HEK293 (cell line): ENCODE measurements at regions of chr1 and their contacts with region 1.

Region 1: DNA sequence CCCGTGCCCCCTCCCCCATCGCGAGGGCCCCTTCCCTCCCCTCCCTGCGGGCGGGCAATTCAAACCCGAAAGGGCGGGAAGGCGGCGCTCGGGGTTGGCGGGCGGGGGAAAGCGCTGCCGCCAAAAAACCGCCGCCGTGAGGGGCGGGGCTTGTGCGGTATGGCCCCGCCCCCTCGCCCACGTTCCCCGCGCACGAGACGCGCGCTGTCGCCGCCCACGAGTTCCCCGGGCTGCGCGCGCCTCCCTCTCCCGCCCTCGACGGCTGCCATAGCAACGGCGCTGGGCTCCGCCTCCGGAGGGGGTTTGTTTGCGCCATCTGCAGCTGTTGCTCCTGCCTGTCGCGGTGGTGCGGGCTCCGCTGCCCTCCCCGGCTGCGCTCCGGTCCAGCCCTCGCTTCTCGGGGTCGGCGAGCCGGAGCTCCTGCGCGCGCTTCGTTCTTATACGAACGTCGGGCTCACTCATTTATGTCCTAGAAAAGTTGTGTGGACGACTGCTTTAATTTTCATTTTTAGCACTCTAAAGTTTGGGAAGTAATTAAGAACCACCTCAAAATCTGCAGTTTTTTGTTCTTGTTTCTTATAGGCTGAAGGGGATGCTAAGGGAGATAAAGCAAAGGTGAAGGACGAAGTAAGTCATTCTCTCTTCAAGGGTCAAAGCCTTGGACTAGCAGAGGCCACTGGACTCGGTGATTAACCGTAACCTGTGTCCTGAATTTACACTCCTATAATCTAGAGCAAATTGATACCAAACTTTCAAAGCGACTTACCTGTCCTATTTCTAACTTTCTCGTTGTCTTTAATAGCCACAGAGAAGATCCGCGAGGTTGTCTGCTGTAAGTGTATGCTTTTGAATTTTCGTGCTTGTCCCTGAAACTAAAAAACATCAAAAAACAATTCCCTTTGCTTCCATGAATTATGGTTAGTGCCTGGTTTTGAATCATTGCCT is 933 bp downstream of the HMGN2 start:
- H3K4me3 ChIP-seq: peak overlapping the region; percentile 88
- H3K27ac ChIP-seq: peak overlapping the region; percentile 100; the same call in 1 of the 2 replicates
- H3K4me1 ChIP-seq: peaks cover 2% of the 10 kb centered on the region; the same call in 1 of the 2 replicates
- CTCF ChIP-seq: no peak

Region 2: GRCh38 chr1:26274801-26275425 is 198.3 kb before region 1 on chr1:
- CTCF ChIA-PET with region 1: no interaction called
- POLR2A ChIA-PET with region 1: no interaction called
- H3K4me3 ChIP-seq: no peak overlapping the region
- H3K27ac ChIP-seq: no peak overlapping the region
- H3K4me1 ChIP-seq: 0 out of 2 replicates have a peak, but pooled peaks cover 3% of the 10 kb centered on the region
- CTCF ChIP-seq: no peak

Region 3: GRCh38 chr1:26431979-26432695 is 41.0 kb before region 1 on chr1 and contains the start of gene DHDDS:
- CTCF ChIA-PET with region 1: interaction called, 14 read pairs
- POLR2A ChIA-PET with region 1: interaction called, 13 read pairs
- H3K4me3 ChIP-seq: peak within 1 kb of the TSS; percentile 64
- H3K27ac ChIP-seq: peak within 1 kb of the TSS; percentile 1; the same call in 1 of the 2 replicates
- H3K4me1 ChIP-seq: peaks cover 5% of the 10 kb centered on the region
- CTCF ChIP-seq: no peak

Region 4: DNA sequence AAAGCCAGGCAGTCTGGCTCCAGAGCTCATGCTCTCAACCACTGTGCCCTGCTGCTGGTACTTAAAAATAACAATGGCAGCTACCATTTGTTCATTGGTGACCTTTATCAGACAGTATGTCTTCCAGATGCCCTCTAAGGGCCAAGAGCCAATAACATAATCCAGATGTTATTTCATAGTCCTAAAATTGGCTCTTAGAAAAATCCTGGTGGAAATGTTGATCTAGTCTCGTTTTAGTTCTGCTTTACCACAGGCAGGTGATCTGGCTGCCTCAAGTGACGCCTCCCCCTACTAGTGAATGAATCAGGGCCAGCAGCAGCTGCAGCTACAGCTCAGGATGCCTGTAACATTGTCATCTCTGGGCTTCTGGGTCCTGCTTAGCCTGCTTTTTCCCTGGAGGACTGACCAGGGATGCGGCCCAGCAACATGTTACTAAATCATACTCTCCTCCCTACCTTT is 13.6 kb before region 1 on chr1:
- CTCF ChIA-PET with region 1: interaction called, 30 read pairs
- POLR2A ChIA-PET with region 1: no interaction called
- H3K4me3 ChIP-seq: no peak overlapping the region
- H3K27ac ChIP-seq: no peak overlapping the region
- H3K4me1 ChIP-seq: no peaks in the 10 kb centered on the region
- CTCF ChIP-seq: no peak

Region 5: GRCh38 chr1:26744075-26744959 is 271.1 kb after region 1 on chr1:
- CTCF ChIA-PET with region 1: no interaction called
- POLR2A ChIA-PET with region 1: no interaction called
- H3K4me3 ChIP-seq: no peak overlapping the region
- H3K27ac ChIP-seq: no peak overlapping the region
- H3K4me1 ChIP-seq: no peaks in the 10 kb centered on the region
- CTCF ChIP-seq: no peak